Endothelial cell of umbilical vein (primary cell): ENCODE measurements at regions of chr20 and their contacts with region 1.

Region 1: GRCh38 chr20:11204926-11205768 is 531.3 kb upstream of the JAG1 start:
- DNase-seq: peak; percentile 79
- H3K4me3 ChIP-seq: no peak overlapping the region
- H3K27ac ChIP-seq: no peak overlapping the region
- H3K4me1 ChIP-seq: no peaks in the 10 kb centered on the region
- H3K27me3 ChIP-seq: no peaks in the 10 kb centered on the region
- CTCF ChIP-seq: peak; percentile 78 to 87
- POLR2A ChIP-seq: no peak

Region 2: DNA sequence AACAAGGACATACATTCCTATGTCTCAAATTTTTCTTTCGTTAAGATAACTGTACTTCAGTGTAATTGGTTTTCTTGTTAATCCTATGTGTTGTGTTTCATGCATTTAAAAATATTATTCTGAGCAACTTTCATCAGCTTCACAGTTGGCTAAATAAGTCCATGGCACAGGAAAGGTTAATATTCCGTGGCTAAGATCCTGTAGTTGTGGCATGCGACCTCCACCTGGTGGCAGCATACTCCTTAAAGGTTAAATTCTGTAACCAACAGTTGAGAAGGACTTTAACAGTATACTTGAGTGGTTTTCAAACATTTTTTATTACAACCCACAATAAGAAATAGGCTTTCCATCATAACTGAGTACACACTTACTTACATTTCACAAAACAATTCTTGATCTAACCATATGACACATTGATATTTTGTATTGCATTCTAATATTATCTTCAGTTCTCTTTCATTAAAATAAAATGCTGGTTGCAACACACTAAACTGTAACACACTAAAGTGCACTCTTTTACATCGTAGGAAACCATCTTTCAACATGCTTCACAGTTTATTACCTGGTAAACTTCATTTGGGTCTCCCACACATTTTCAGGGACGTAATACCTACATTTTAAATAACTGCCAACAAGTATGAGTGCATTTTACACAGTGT is 651.7 kb before region 1 on chr20:
- CTCF ChIA-PET with region 1: interaction called, 11 read pairs
- POLR2A ChIA-PET with region 1: no interaction called
- dilution Hi-C with region 1: no loop called
- intact Hi-C with region 1: loop called (anchors 1 kb)
- DNase-seq: peak; percentile 84
- H3K4me3 ChIP-seq: no peak overlapping the region
- H3K27ac ChIP-seq: no peak overlapping the region
- H3K4me1 ChIP-seq: peaks cover 15% of the 10 kb centered on the region
- H3K27me3 ChIP-seq: no peaks in the 10 kb centered on the region
- CTCF ChIP-seq: peak; percentile 64 to 70
- POLR2A ChIP-seq: no peak

Region 3: DNA sequence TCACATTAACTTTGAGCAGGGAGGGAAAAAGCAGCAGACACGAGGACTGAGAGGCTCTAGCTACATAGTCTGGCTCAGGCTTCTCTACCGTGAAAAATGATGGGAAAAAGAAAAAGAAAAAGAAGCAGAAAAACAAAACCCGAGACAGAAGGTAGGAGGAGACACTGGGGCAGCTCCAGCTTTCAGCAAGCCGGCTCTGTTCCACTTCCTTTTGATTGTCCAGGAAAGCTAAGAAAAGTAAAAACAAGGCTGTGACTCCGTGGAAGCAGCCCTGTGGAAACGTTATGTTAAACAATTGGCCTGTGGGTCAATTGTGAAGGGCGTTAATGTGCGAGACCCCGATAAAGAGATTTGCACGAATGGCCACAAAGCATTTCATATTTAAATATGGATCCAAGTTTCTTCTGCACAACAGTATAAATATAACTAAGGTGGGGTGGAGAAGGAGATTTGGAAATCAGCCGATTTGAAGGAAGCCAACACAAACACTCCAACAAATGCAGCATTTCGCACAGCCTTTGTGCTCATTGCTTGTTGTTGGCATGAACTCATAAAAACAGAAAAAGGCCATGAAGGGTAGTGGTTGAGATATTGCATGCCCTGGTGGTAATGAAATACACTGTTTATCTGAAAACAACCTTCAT is 294.5 kb before region 1 on chr20:
- CTCF ChIA-PET with region 1: interaction called, 4 read pairs
- POLR2A ChIA-PET with region 1: no interaction called
- dilution Hi-C with region 1: no loop called
- intact Hi-C with region 1: loop called (anchors 2 kb)
- DNase-seq: peak; percentile 88
- H3K4me3 ChIP-seq: no peak overlapping the region
- H3K27ac ChIP-seq: peak overlapping the region; percentile 21
- H3K4me1 ChIP-seq: peaks cover 13% of the 10 kb centered on the region
- H3K27me3 ChIP-seq: no peaks in the 10 kb centered on the region
- CTCF ChIP-seq: peak in 1 of 2 donors; percentile 36
- POLR2A ChIP-seq: no peak

Region 4: GRCh38 chr20:11112832-11113231 is 92.3 kb before region 1 on chr20:
- CTCF ChIA-PET with region 1: interaction called, 4 read pairs
- POLR2A ChIA-PET with region 1: no interaction called
- dilution Hi-C with region 1: no loop called
- intact Hi-C with region 1: loop called (anchors 5 kb)
- DNase-seq: no peak
- H3K4me3 ChIP-seq: no peak overlapping the region
- H3K27ac ChIP-seq: no peak overlapping the region
- H3K4me1 ChIP-seq: peaks cover 18% of the 10 kb centered on the region
- H3K27me3 ChIP-seq: no peaks in the 10 kb centered on the region
- CTCF ChIP-seq: no peak
- POLR2A ChIP-seq: no peak

Region 5: GRCh38 chr20:11153819-11154218 is 51.3 kb before region 1 on chr20:
- CTCF ChIA-PET with region 1: no interaction called
- POLR2A ChIA-PET with region 1: no interaction called
- dilution Hi-C with region 1: no loop called
- intact Hi-C with region 1: no loop called
- DNase-seq: no peak
- H3K4me3 ChIP-seq: no peak overlapping the region
- H3K27ac ChIP-seq: no peak overlapping the region
- H3K4me1 ChIP-seq: peaks cover 30% of the 10 kb centered on the region
- H3K27me3 ChIP-seq: no peaks in the 10 kb centered on the region
- CTCF ChIP-seq: no peak
- POLR2A ChIP-seq: no peak

Region 6: DNA sequence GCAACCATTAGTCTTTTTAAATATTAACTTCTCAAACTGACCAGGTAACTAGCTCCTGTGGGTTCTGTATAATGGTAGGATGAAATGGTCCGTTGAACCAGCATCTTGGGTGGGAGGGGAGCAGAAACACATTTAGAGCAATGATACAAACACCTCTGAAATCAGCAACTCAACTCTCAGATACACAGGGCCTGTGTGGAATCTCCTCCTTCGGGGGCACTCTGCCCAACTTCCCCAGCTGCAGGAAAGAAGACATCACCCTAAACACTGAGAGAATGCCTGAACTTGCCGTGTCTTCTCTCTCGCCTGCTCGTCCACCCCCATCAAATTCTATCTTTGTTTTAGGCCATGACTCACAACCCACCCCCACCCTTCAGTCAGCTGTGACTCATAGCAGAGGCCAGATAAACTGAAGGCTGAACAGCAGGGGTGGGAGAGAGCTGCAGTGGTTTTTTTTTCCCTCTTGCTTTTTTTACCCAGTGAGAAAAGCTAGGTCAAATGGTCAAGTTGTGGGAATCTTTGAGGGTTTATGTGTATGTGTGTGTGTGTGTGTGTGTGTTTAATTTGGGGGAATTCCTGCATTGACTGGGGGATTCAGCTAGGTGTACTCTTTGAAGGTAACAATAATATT is 62.1 kb after region 1 on chr20:
- CTCF ChIA-PET with region 1: interaction called, 22 read pairs
- POLR2A ChIA-PET with region 1: no interaction called
- dilution Hi-C with region 1: no loop called
- intact Hi-C with region 1: no loop called
- DNase-seq: peak; percentile 94
- H3K4me3 ChIP-seq: no peak overlapping the region
- H3K27ac ChIP-seq: peak overlapping the region; percentile 56
- H3K4me1 ChIP-seq: peaks cover 23% of the 10 kb centered on the region
- H3K27me3 ChIP-seq: no peaks in the 10 kb centered on the region
- CTCF ChIP-seq: peak in 1 of 2 donors; percentile 13
- POLR2A ChIP-seq: no peak